Esophagus muscularis mucosa (tissue), 4 donors: ENCODE measurements at regions of chr9 and their contacts with region 1.

Region 1: GRCh38 chr9:125407974-125408900 is 146.6 kb downstream of the GAPVD1 start:
- DNase-seq: peak; percentile 94
- H3K4me3 ChIP-seq: peak overlapping the region; percentile 62 to 77 (median 66)
- H3K27ac ChIP-seq: peak overlapping the region in 3 of 4 donors; percentile 37 to 63 (median 47)
- H3K4me1 ChIP-seq: peaks cover 5 to 15% (median 15%) of the 10 kb centered on the region in 4 donors
- H3K27me3 ChIP-seq: no peaks in the 10 kb centered on the region
- CTCF ChIP-seq: peak; percentile 64 to 87 (median 74)
- EP300 ChIP-seq: no peak
- POLR2A ChIP-seq: no peak

Region 2: DNA sequence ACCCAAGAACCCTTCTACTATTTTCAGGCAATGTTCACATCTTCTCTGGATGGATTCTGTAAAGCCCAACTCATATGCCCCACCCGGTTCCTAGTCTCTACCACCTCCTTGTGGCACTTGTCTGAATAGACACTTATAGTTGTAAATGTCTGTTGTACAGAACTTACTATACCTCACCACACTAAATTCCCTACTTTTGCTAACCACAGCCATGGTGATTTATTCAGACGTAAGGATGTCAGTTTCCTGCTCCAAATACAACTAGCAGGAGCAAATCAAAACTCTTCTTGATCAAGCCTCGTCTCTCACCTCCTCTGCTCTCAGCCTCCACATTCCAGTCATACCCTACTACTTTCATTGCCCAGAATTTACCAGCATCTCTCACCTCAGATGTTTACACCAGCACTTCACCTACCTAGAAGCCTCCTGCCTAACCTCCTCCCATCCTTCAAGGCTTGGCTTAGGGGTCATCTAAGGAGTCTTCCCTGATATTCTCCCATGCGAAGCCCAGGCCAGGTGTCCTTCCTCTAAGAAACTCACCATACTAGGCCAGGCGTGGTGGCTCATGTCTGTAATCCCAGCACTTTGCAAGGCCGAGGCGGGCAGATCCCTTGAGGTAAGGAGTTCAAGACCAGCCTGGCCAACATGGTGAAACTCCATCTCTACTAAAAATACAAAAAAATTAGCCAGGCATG is 223.3 kb after region 1 on chr9:
- intact Hi-C with region 1: loop called (anchors 5 kb)
- DNase-seq: no peak
- H3K4me3 ChIP-seq: no peak overlapping the region
- H3K27ac ChIP-seq: no peak overlapping the region
- H3K4me1 ChIP-seq: peaks cover 10 to 37% (median 21%) of the 10 kb centered on the region in 4 donors
- H3K27me3 ChIP-seq: no peaks in the 10 kb centered on the region
- CTCF ChIP-seq: peak; percentile 52 to 63 (median 62)
- EP300 ChIP-seq: no peak
- POLR2A ChIP-seq: no peak

Region 3: GRCh38 chr9:126228781-126229444 is 820.7 kb after region 1 on chr9:
- intact Hi-C with region 1: loop called (anchors 5 kb)
- DNase-seq: peak; percentile 94
- H3K4me3 ChIP-seq: no peak overlapping the region
- H3K27ac ChIP-seq: no peak overlapping the region
- H3K4me1 ChIP-seq: peaks cover 0 to 8% (median 3%) of the 10 kb centered on the region in 4 donors
- H3K27me3 ChIP-seq: peaks cover 0 to 6% (median 0%) of the 10 kb centered on the region in 4 donors
- CTCF ChIP-seq: peak in 2 of 3 experiments; percentile 89 to 97
- EP300 ChIP-seq: no peak
- POLR2A ChIP-seq: no peak